CD4-positive, alpha-beta memory T cell (primary cell): ENCODE measurements at regions of chr5 and their contacts with region 1.

Region 1: GRCh38 chr5:109688971-109689739 is 572 bp upstream of the MAN2A1 start:
- DNase-seq: peak; percentile 77 to 83 (median 79)
- H3K4me3 ChIP-seq: peak overlapping the region; percentile 30 to 75
- H3K4me3 Mint-ChIP-seq: peak overlapping the region; percentile 88 to 96 (median 92)
- H3K27ac ChIP-seq: peak overlapping the region; percentile 88
- H3K27ac Mint-ChIP-seq: peak overlapping the region; percentile 79 to 97 (median 94)
- H3K4me1 ChIP-seq: peaks cover 34% of the 10 kb centered on the region
- H3K4me1 Mint-ChIP-seq: peaks cover 25 to 37% (median 31%) of the 10 kb centered on the region in 4 donors
- H3K27me3 ChIP-seq: no peaks in the 10 kb centered on the region
- H3K27me3 Mint-ChIP-seq: no peaks in the 10 kb centered on the region

Region 2: GRCh38 chr5:109409844-109410388 is 279.2 kb before region 1 on chr5 and contains the start of gene PJA2:
- CTCF ChIA-PET with region 1: interaction called, 4 read pairs
- POLR2A ChIA-PET with region 1: interaction called, 38 read pairs
- intact Hi-C with region 1: loop called (anchors 1 kb)
- DNase-seq: peak; percentile 97 to 99 (median 98)
- H3K4me3 ChIP-seq: peak within 1 kb of the TSS; percentile 95 to 96
- H3K4me3 Mint-ChIP-seq: peak within 1 kb of the TSS; percentile 91 to 100 (median 99)
- H3K27ac ChIP-seq: peak within 1 kb of the TSS; percentile 97
- H3K27ac Mint-ChIP-seq: peak within 1 kb of the TSS; percentile 96 to 100 (median 99)
- H3K4me1 ChIP-seq: peaks cover 50% of the 10 kb centered on the region
- H3K4me1 Mint-ChIP-seq: peaks cover 26 to 65% (median 38%) of the 10 kb centered on the region in 4 donors
- H3K27me3 ChIP-seq: no peaks in the 10 kb centered on the region
- H3K27me3 Mint-ChIP-seq: peaks cover 0 to 3% of the 10 kb centered on the region in 2 donors
- total RNA-seq, gene PJA2: 90.0 to 90.6 TPM

Region 3: GRCh38 chr5:109640976-109641375 is 48.2 kb before region 1 on chr5:
- CTCF ChIA-PET with region 1: no interaction called
- POLR2A ChIA-PET with region 1: no interaction called
- intact Hi-C with region 1: no loop called
- DNase-seq: no peak
- H3K4me3 ChIP-seq: no peak overlapping the region
- H3K4me3 Mint-ChIP-seq: no peak overlapping the region
- H3K27ac ChIP-seq: no peak overlapping the region
- H3K27ac Mint-ChIP-seq: no peak overlapping the region
- H3K4me1 ChIP-seq: no peaks in the 10 kb centered on the region
- H3K4me1 Mint-ChIP-seq: no peaks in the 10 kb centered on the region
- H3K27me3 ChIP-seq: no peaks in the 10 kb centered on the region
- H3K27me3 Mint-ChIP-seq: peaks cover 0 to 3% of the 10 kb centered on the region in 2 donors

Region 4: DNA sequence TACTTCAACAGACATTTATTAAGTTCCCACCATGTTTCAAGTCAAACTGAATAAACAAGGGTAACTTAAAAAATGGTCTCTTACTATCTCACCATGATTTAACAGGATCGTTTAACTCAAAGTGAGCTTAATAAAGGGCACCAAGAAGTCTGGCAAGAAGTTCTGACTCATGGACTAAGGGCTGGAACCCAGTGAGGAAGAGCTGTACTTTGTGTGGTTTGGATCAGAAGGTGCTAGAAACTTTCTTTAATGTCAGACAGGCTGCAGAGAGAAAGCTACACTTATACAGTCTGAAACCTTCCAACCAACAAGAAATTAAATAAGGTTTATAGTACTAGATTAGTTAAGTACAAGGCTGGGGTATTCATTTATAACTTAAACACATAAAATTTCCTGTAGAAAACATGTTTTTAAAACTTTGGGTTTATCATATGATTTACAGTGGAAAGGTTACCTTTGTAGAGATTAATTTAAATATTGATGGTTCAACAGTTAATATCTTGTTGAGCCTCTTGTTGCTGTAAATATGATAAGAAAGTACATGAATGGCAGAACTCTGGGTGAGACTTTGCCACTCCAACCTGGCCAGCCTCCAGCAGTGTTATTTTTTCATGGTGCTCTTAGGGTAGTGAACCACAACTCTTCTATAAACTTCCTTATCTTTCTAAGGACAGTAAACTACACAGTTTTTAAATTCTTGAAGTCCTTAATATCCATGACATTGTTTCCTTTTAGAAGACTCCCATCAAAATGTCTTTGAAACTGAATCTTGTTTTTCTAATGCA is 163.4 kb after region 1 on chr5:
- CTCF ChIA-PET with region 1: interaction called, 4 read pairs
- POLR2A ChIA-PET with region 1: interaction called, 39 read pairs
- intact Hi-C with region 1: loop called (anchors 1 kb)
- DNase-seq: no peak
- H3K4me3 ChIP-seq: no peak overlapping the region
- H3K4me3 Mint-ChIP-seq: peak overlapping the region in 5 of 8 donors; percentile 10 to 51 (median 28)
- H3K27ac ChIP-seq: no peak overlapping the region
- H3K27ac Mint-ChIP-seq: peak overlapping the region; percentile 16 to 77 (median 58)
- H3K4me1 ChIP-seq: peaks cover 89% of the 10 kb centered on the region
- H3K4me1 Mint-ChIP-seq: peaks cover 61 to 82% (median 68%) of the 10 kb centered on the region in 4 donors
- H3K27me3 ChIP-seq: no peaks in the 10 kb centered on the region
- H3K27me3 Mint-ChIP-seq: no peaks in the 10 kb centered on the region

Region 5: DNA sequence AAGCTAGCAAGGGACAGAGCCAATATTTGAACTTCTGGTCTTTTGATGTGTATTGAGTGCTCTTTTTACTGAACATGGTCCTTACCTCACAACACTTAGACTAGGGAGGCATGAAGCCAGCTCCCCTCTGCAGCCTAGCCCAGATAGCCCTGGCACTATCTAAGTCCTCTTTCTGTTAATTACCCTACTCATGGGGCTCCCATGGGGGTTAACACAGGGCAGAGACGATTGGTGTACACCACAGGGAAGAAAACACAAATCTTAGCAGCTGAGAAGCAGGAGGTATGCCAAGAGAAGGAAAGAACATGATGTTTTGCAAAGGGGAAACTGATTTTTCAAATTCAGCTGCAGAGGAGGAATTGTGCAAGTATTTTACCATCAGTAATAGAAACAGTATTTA is 653.5 kb after region 1 on chr5:
- CTCF ChIA-PET with region 1: interaction called, 3 read pairs
- POLR2A ChIA-PET with region 1: no interaction called
- intact Hi-C with region 1: loop called (anchors 2 kb)
- DNase-seq: no peak
- H3K4me3 ChIP-seq: no peak overlapping the region
- H3K4me3 Mint-ChIP-seq: no peak overlapping the region
- H3K27ac ChIP-seq: no peak overlapping the region
- H3K27ac Mint-ChIP-seq: no peak overlapping the region
- H3K4me1 ChIP-seq: no peaks in the 10 kb centered on the region
- H3K4me1 Mint-ChIP-seq: no peaks in the 10 kb centered on the region
- H3K27me3 ChIP-seq: no peaks in the 10 kb centered on the region
- H3K27me3 Mint-ChIP-seq: no peaks in the 10 kb centered on the region

Region 6: GRCh38 chr5:110738812-110739651 is 1049.9 kb after region 1 on chr5 and contains the start of gene SLC25A46:
- CTCF ChIA-PET with region 1: interaction called, 4 read pairs
- POLR2A ChIA-PET with region 1: interaction called, 8 read pairs
- intact Hi-C with region 1: loop called (anchors 2 kb)
- DNase-seq: peak; percentile 91 to 93 (median 92)
- H3K4me3 ChIP-seq: peak within 1 kb of the TSS; percentile 74 to 86
- H3K4me3 Mint-ChIP-seq: peak within 1 kb of the TSS; percentile 94 to 99 (median 98)
- H3K27ac ChIP-seq: peak within 1 kb of the TSS; percentile 88
- H3K27ac Mint-ChIP-seq: peak within 1 kb of the TSS; percentile 96 to 100 (median 99)
- H3K4me1 ChIP-seq: peaks cover 32% of the 10 kb centered on the region
- H3K4me1 Mint-ChIP-seq: peaks cover 21 to 44% (median 31%) of the 10 kb centered on the region in 4 donors
- H3K27me3 ChIP-seq: no peaks in the 10 kb centered on the region
- H3K27me3 Mint-ChIP-seq: peaks cover 5 to 7% of the 10 kb centered on the region in 2 donors
- total RNA-seq, gene SLC25A46: 38.1 TPM